ENCODE measurements at regions of chr6 and their contacts with region 1.

Region 1: DNA sequence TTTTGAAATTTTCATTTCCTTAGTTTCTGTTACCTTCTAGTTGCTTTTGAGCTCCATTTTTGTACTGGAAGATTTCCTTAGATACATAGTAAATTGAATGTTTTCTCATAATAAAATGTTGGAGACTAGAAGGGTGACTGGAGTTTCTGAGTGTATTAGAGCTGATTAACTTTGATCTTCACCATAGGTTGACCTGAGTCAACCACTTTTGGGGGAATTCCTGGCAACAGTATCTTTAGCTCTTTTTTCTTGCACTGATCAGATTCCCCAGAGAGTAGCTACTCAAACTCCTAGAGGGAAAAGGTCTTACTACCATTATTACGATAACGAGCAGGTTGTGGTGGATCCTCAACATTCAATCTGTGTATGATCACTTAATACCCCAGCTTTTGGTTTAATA is 72.7 kb downstream of the KHDC1L start:
- DNase-seq: no peak
- H3K4me3 ChIP-seq: no peak overlapping the region
- H3K27me3 ChIP-seq: no peaks in the 10 kb centered on the region
- CTCF ChIP-seq: no peak

Region 2: GRCh38 chr6:72140795-72141194 is 1011.8 kb before region 1 on chr6:
- CTCF ChIA-PET with region 1: no interaction called
- POLR2A ChIA-PET with region 1: interaction called, 13 read pairs
- DNase-seq: no peak
- H3K4me3 ChIP-seq: no peak overlapping the region
- H3K27me3 ChIP-seq: no peaks in the 10 kb centered on the region
- CTCF ChIP-seq: no peak